ENCODE measurements at regions of chr3 and their contacts with region 1.

Region 1: DNA sequence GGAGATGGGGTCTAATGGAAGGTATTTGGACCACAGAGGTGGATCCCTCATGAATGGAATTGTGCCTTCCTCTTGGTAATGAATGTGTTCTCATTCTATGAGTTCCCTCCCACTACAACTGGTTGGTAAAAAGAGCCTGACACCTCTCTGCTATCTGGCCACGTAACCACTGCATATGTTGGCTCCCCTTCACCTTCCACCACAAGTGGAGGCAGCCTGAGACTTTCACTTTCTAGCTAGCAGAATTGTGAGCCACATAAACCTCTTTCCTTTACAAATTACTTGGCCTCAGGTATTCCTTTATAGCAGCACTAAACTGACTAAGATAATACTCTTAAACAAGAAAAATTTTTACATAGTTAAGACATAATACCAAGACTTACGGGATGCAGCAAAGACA is 155.3 kb downstream of the NR1I2 start:
- DNase-seq: no peak
- H3K4me3 ChIP-seq: no peak overlapping the region
- H3K27ac ChIP-seq: no peak overlapping the region
- H3K4me1 ChIP-seq: no peaks in the 10 kb centered on the region
- H3K27me3 ChIP-seq: no peaks in the 10 kb centered on the region
- CTCF ChIP-seq: no peak

Region 2: DNA sequence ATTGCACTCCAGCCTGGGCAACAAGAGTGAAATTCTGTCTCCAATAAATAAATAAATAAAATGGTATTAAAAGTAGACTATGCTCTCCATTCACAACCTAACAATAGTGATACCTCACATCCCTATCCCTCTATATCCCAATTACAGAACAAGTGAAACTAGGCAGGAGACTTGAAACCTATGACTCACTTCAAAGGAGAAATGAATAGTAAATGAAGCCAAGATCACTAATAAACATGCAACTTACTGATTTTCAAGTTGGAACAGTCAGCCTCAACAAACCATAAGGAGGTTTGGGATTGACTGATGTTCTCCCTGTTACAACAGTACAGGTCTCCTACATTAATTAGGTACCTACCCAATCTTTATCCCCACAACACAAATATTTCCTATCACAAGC is 53.7 kb after region 1 on chr3:
- CTCF ChIA-PET with region 1: no interaction called
- POLR2A ChIA-PET with region 1: no interaction called
- intact Hi-C with region 1: no loop called
- DNase-seq: no peak
- H3K4me3 ChIP-seq: no peak overlapping the region
- H3K27ac ChIP-seq: no peak overlapping the region
- H3K4me1 ChIP-seq: no peaks in the 10 kb centered on the region
- H3K27me3 ChIP-seq: no peaks in the 10 kb centered on the region
- CTCF ChIP-seq: no peak

Region 3: DNA sequence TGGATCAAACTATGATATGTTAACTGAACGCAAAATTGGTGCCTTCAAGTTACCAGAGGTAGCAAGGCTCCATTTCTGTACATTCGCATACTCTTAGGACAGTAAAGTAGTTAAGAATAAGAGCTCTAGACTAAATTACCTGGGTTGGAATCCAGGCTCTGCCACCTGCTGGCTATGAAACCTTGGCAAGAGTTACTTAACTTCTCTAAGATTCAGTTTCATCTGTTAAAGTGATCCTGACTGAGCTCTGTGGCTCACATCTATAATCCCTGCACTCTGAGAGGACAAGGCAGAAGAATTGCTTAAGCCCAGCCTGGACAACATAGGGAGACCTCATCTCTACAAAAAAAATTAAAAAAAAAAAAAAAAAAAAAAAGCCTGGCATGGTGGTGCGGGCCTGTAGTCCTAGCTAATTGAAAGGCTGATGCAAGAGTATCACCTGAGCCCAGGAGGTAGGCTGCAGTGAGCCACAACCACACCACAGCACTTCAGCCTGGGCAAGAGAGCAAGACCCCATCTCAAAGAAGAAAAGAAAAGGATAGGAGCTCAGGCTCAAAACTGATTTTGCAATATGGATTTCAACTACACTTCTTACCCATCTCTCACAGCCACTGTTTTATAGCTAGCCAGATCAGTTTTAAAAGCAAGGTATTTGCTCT is 135.8 kb after region 1 on chr3:
- CTCF ChIA-PET with region 1: interaction called, 11 read pairs
- POLR2A ChIA-PET with region 1: no interaction called
- intact Hi-C with region 1: no loop called
- DNase-seq: no peak
- H3K4me3 ChIP-seq: no peak overlapping the region
- H3K27ac ChIP-seq: 0 out of 2 replicates have a peak overlapping the region, but pooled peaks have one; percentile 16
- H3K4me1 ChIP-seq: no peaks in the 10 kb centered on the region
- H3K27me3 ChIP-seq: no peaks in the 10 kb centered on the region
- CTCF ChIP-seq: no peak

Measured in PC-9 (cell line).